ENCODE measurements at regions of chr22 and their contacts with region 1.

Region 1: GRCh38 chr22:41446639-41447434 is at the start of gene TOB2:
- DNase-seq: peak; percentile 98
- H3K4me3 ChIP-seq: peak within 1 kb of the TSS; percentile 89 to 99 (median 98)
- H3K27ac ChIP-seq: peak within 1 kb of the TSS; percentile 97 to 99 (median 98)
- H3K4me1 ChIP-seq: peaks cover 0 to 30% (median 23%) of the 10 kb centered on the region in 4 donors
- H3K27me3 ChIP-seq: no peaks in the 10 kb centered on the region
- CTCF ChIP-seq: no peak
- EP300 ChIP-seq: peak in 2 of 4 donors; percentile 48 to 88
- POLR2A ChIP-seq: peak; percentile 100
- total RNA-seq, gene TOB2: 23.2 to 38.2 (median 31.8) TPM

Region 2: DNA sequence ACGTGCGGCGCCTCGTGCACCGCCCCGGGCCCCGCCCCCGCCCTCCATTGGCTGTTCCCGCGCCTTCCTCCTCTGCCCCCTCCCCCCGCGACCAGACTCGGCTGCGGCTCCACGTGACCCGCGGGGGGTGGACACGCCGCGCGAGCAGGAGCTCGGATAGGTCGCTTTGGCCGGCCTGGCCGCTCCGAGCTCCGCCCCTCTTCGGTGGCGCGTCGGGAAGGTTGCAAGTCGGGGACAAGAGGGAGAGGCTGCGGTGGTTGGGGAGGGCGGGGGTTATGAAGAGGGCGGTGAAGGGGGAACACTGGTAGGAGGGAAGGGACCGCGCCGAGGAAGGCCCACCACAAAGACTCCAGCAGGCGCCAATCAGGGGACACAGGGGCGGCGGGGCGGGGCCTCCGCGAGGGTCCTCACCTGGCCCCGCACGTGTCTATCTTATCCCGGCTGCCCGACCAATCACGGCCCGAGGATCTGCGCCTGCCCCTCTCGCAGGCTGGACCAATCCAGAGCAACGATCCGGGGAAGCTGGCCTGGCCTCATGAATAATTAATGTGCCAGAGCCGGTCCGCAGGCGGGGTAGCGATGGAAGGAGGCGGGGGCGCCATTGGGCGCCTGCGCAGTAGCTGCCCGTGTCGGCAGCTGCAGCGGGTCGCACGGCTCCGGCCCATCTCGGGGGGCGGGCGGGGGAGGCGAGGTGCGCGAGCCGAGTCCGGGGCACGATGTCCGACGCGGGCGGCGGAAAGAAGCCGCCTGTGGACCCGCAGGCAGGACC is 65.3 kb before region 1 on chr22 and contains the start of gene TEF:
- intact Hi-C with region 1: loop called (anchors 1 kb)
- DNase-seq: peak; percentile 100
- H3K4me3 ChIP-seq: peak within 1 kb of the TSS; percentile 62 to 90 (median 85)
- H3K27ac ChIP-seq: peak within 1 kb of the TSS; percentile 90 to 99 (median 99)
- H3K4me1 ChIP-seq: peaks cover 0 to 36% (median 28%) of the 10 kb centered on the region in 4 donors
- H3K27me3 ChIP-seq: no peaks in the 10 kb centered on the region
- CTCF ChIP-seq: no peak
- EP300 ChIP-seq: peak in 2 of 4 donors; percentile 32 to 44
- POLR2A ChIP-seq: peak; percentile 16 to 57
- total RNA-seq, gene TEF: 21.3 to 30.3 (median 24.8) TPM

Region 3: DNA sequence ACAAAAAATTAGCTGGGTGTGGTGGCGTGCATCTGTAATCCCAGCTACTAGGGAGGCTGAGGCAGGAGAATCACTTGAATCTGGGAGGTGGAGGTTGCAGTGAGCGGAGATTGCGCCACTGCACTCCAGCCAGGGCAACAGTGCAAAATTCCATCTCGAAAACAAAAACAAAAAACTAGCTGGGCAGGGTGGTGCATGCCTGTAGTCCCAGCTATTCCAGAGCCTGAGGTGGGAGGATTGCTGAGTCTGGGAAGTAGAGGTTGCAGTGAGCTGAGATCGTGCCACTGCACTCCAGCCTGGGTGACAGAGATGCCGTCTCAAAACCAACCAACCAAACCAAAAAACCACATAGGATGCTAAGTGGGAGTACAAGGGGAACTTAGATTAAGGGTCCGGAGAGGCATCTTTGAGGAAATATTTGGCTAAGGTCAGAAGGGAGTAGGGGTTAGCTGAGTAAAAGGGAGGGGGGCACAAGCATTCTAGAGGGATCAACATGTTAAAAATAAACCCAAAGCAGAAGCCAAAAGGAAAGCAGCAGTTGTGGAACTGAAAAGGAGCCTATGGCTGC is 11.4 kb after region 1 on chr22:
- intact Hi-C with region 1: no loop called
- DNase-seq: no peak
- H3K4me3 ChIP-seq: no peak overlapping the region
- H3K27ac ChIP-seq: no peak overlapping the region
- H3K4me1 ChIP-seq: peaks cover 0 to 4% (median 0%) of the 10 kb centered on the region in 4 donors
- H3K27me3 ChIP-seq: no peaks in the 10 kb centered on the region
- CTCF ChIP-seq: no peak
- EP300 ChIP-seq: no peak
- POLR2A ChIP-seq: no peak

Region 4: GRCh38 chr22:41468381-41469217 is 21.8 kb after region 1 on chr22 and contains the starts of genes ACO2 and PHF5A:
- intact Hi-C with region 1: loop called (anchors 1 kb)
- DNase-seq: peak; percentile 98
- H3K4me3 ChIP-seq: peak within 1 kb of the TSS; percentile 68 to 99 (median 92)
- H3K27ac ChIP-seq: peak within 1 kb of the TSS; percentile 91 to 98 (median 96)
- H3K4me1 ChIP-seq: peaks cover 0 to 54% (median 39%) of the 10 kb centered on the region in 4 donors
- H3K27me3 ChIP-seq: no peaks in the 10 kb centered on the region
- CTCF ChIP-seq: no peak
- EP300 ChIP-seq: peak in 2 of 4 donors; percentile 39 to 42
- POLR2A ChIP-seq: peak; percentile 72 to 73
- total RNA-seq, gene ACO2: 67.3 to 90.3 (median 83.0) TPM
- total RNA-seq, gene PHF5A: 31.9 to 54.2 (median 44.4) TPM

Region 5: GRCh38 chr22:41682033-41682807 is 235.4 kb after region 1 on chr22:
- intact Hi-C with region 1: no loop called
- DNase-seq: peak; percentile 94
- H3K4me3 ChIP-seq: peak overlapping the region; percentile 42 to 60 (median 55)
- H3K27ac ChIP-seq: peak overlapping the region; percentile 83 to 90 (median 84)
- H3K4me1 ChIP-seq: peaks cover 0 to 17% (median 8%) of the 10 kb centered on the region in 4 donors
- H3K27me3 ChIP-seq: no peaks in the 10 kb centered on the region
- CTCF ChIP-seq: no peak
- EP300 ChIP-seq: no peak
- POLR2A ChIP-seq: peak; percentile 82 to 85